Right lobe of liver (tissue), 6 donors: ENCODE measurements at regions of chr4 and their contacts with region 1.

Region 1: DNA sequence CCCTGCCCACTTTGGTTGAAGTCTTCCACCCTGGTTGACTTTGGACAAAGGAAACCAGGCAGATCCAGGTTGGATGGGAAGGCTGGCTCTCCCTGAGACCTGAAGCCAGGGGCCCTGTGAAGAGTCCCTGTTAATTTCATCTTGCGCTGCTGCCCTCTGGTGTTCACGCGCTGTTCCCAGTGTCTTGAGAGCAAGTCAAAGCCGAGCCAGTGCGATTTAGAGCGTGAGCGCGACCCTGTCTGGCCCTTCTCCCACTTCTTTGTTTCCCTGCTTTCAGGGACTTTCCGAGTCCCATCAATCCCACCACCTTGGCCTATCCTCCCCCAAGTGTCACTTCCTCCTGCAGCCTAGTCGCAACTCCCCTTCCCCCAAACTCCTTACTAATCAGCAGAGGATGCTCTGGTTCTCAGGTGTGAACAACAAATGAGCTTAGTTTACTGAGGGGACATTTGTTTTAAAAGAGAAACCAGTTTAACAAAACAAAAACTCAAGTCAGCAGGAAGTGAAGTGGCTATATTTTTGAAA is 25.8 kb upstream of the CHRNA9 start:
- DNase-seq: peak; percentile 85 to 88 (median 86)
- ATAC-seq: peak; percentile 93 to 95 (median 94)
- H3K4me3 ChIP-seq: no peak overlapping the region
- H3K27ac ChIP-seq: no peak overlapping the region
- H3K4me1 ChIP-seq: no peaks in the 10 kb centered on the region
- H3K27me3 ChIP-seq: no peaks in the 10 kb centered on the region
- CTCF ChIP-seq: peak; percentile 80 to 91 (median 88)
- POLR2A ChIP-seq: no peak

Region 2: GRCh38 chr4:40149960-40150385 is 159.3 kb before region 1 on chr4:
- intact Hi-C with region 1: loop called in 1 of 2 experiments (anchors 10 kb)
- DNase-seq: peak in 1 of 3 donors; percentile 74
- ATAC-seq: peak; percentile 96 to 100 (median 98)
- H3K4me3 ChIP-seq: no peak overlapping the region
- H3K27ac ChIP-seq: no peak overlapping the region
- H3K4me1 ChIP-seq: no peaks in the 10 kb centered on the region
- H3K27me3 ChIP-seq: no peaks in the 10 kb centered on the region
- CTCF ChIP-seq: peak; percentile 87 to 95 (median 90)
- POLR2A ChIP-seq: no peak

Region 3: DNA sequence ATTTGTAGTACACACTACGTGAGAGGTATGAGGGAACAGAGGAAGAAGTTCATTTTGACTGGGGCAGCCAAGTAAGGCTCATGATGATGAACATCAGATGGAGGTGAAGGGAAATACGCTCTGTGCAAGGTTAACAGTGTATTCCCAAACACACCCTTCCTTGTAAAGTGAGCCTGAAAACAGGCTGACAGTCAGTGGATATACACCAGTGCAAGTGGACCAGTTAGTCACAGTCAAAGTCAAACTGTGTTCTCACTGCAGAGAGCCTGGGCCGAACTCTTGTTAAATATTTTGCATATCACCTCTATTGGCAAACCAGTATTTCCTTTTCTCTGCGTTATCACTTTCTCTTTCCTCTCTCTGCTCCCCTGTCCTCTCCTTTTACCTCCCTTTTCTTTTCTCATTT is 135.8 kb before region 1 on chr4:
- intact Hi-C with region 1: loop called in 1 of 2 experiments (anchors 10 kb)
- DNase-seq: no peak
- ATAC-seq: peak in 1 of 4 donors; percentile 26
- H3K4me3 ChIP-seq: no peak overlapping the region
- H3K27ac ChIP-seq: no peak overlapping the region
- H3K4me1 ChIP-seq: no peaks in the 10 kb centered on the region
- H3K27me3 ChIP-seq: no peaks in the 10 kb centered on the region
- CTCF ChIP-seq: no peak
- POLR2A ChIP-seq: no peak